AG04449 (cell line): ENCODE measurements at regions of chr20 and their contacts with region 1.

Region 1: DNA sequence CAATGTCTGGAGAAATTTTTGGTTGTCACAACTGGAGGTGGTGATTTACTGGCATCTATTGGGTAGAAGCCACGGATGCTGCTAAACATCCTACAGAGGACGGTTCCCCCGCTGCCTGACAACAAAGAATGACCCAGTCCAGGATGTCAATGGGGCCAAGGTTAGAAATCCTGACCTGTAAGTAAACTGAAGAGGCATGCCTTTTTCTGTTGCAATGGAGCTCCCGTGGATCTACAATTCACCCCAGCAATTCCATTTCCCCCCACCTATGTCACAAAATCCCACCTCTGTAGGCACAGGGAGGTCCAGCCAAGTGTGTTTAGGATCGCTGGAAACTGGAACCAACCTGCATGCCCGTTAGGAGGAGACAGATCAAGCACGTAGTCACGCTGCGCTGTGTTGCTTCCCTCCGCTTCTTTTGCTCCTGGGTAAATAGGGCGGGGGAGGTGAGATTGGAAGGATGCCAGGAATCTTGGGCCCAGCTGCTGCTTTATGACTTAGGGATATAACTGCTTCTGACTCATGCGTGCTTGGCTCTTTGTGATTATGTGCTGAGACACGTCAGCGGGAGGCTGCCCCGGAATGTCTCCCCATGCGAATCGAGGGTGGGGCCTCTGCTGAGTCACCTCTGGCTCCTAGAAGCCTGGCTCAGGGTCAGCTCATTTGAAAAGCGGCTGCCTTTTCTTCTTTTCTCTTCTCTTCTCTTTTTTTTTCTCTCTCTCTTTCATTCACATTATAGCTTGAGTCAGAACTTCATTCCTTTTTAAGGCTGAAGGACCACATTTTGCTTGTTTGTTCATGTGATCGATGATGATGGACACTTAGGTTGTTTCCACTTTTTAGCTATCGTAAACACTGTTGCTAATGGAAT is 12.4 kb upstream of the PEDS1 start:
- DNase-seq: peak; percentile 99
- H3K4me3 ChIP-seq: peak overlapping the region; percentile 67
- CTCF ChIP-seq: no peak

Region 2: GRCh38 chr20:50070991-50071888 is 94.7 kb before region 1 on chr20:
- CTCF ChIA-PET with region 1: interaction called, 14 read pairs
- POLR2A ChIA-PET with region 1: no interaction called
- DNase-seq: no peak
- H3K4me3 ChIP-seq: peak overlapping the region; percentile 59
- CTCF ChIP-seq: peak; percentile 98

Region 3: GRCh38 chr20:50110141-50110925 is 55.6 kb before region 1 on chr20:
- CTCF ChIA-PET with region 1: interaction called, 44 read pairs
- POLR2A ChIA-PET with region 1: interaction called, 3 read pairs
- DNase-seq: no peak
- H3K4me3 ChIP-seq: no peak overlapping the region; the same call in 1 of the 2 replicates
- CTCF ChIP-seq: no peak

Region 4: GRCh38 chr20:50120897-50121693 is 44.8 kb before region 1 on chr20:
- CTCF ChIA-PET with region 1: interaction called, 156 read pairs
- POLR2A ChIA-PET with region 1: interaction called, 3 read pairs
- DNase-seq: no peak
- H3K4me3 ChIP-seq: no peak overlapping the region
- CTCF ChIP-seq: peak; percentile 90

Region 5: GRCh38 chr20:50153485-50154377 is 12.2 kb before region 1 on chr20 and contains the start of gene PEDS1:
- CTCF ChIA-PET with region 1: interaction called, 24 read pairs
- POLR2A ChIA-PET with region 1: interaction called, 8 read pairs
- DNase-seq: no peak
- H3K4me3 ChIP-seq: peak within 1 kb of the TSS; percentile 89
- CTCF ChIP-seq: no peak

Region 6: GRCh38 chr20:50189681-50190582 is 24.0 kb after region 1 on chr20:
- CTCF ChIA-PET with region 1: interaction called, 10 read pairs
- POLR2A ChIA-PET with region 1: interaction called, 3 read pairs
- DNase-seq: no peak
- H3K4me3 ChIP-seq: peak overlapping the region; percentile 94
- CTCF ChIP-seq: peak; percentile 92